Activated naive CD4-positive, alpha-beta T cell treated with anti-CD3 and anti-CD28 coated beads, Interleukin-2, amount 10 ng/mL, durations not matched to agents 7 days and 5 days (primary cell): ENCODE measurements at regions of chr12 and their contacts with region 1.

Region 1: DNA sequence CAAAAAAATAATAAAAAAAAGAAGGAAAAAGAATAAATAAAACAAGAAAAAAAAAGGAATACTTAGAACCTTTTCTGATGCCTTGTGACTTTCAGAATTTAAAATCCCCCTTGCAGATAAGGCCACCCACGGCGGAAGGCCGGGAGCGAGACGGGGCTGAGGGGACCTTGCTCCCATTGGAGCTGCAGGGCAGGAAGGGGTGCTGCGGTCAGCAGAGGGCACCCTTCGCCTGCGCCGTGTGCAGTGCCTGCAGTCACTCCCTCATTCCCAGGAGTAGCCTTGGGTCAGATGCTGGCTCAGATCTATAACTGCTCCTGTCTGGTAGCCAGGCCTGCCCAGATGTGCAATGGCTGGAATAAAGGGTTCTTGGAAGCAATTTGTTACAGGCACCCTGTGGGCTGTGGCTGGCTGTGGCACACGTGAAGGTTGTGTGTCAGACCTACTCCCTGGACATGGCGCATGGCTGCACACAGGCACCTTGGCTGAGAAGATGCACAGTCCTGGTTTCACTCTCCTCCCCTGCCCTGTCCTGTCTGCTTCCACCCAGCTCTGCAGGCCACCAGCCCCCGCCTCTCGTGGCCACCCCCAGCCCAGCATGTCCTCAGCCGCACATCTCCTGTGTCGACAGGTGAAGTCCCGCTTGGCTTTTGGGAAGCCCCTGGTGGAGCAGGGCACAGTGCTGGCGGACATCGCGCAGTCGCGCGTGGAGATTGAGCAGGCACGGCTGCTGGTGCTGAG is 13.4 kb upstream of the ALDH2 start:
- DNase-seq: no peak
- H3K4me3 Mint-ChIP-seq: no peak overlapping the region
- H3K27ac Mint-ChIP-seq: no peak overlapping the region
- H3K4me1 Mint-ChIP-seq: peaks cover 12% of the 10 kb centered on the region
- H3K27me3 Mint-ChIP-seq: no peaks in the 10 kb centered on the region

Region 2: DNA sequence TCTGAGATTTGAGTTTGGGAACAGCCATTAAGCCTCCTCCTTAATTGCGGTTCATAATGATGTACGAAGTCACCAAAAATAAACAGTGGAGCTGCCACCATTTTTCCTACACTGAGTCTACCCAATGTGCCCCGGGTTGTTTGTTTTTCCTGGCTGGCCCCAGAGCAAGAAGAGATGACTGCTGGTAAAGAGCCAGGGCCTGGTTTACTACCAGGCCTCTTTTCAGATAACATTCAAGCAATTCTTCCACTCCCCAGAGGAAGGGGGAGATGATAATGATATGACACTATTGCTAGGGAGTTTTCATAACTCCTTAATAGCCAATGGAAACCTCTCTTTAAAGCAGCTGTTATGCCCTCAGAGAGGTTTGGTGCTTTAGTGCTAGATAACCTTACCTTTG is 109.9 kb before region 1 on chr12:
- CTCF ChIA-PET with region 1: no interaction called
- DNase-seq: no peak
- H3K4me3 Mint-ChIP-seq: no peak overlapping the region
- H3K27ac Mint-ChIP-seq: no peak overlapping the region
- H3K4me1 Mint-ChIP-seq: peaks cover 2% of the 10 kb centered on the region
- H3K27me3 Mint-ChIP-seq: no peaks in the 10 kb centered on the region

Region 3: DNA sequence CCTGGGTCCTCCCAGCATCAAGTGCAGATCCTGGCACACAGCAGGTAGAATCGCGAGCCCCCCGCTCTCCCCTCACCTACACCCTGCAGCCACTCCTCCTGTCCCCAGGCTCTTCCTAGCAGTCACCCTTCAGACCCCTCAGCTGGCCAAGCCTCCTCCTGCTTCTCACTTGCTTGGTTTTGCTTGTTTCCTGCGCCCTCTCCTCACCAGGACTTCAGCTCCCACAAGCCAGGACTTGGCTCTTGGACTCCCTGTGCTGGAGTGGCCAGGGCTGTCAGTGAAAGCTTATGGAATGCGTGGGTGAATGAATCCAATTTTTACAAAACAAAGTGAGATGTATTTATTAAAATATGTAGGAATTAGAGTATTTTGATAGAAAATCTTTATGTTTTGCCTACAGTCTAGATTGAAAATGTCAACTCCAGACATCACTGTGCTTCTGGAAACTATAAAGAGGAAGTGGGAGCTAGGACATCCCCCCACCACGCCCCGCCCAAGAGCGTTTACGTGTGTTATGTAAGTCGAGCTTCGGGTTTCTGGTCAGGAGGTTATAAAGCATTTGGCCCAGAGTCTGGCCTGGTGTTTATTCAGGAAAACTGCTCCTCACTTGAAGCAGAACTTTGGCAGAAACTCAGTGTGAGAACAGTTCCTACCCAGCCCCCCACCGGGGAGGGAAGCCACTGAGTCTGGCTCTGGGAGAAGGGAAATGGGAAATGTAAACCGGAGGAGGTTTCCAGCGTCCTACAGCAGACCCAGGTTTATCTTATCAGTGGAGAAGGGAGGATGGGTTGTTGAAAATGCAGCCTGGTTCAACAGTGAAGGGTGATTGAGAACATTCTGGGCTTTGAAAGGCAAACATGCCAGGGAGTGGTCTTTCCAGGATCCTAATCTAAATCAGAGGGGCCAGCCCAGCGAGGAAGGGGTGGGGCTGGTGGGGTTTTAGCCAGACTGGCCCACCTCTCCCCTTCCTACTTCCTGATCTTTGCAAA is 22.2 kb after region 1 on chr12:
- CTCF ChIA-PET with region 1: no interaction called
- DNase-seq: no peak
- H3K4me3 Mint-ChIP-seq: no peak overlapping the region
- H3K27ac Mint-ChIP-seq: no peak overlapping the region
- H3K4me1 Mint-ChIP-seq: peaks cover 7% of the 10 kb centered on the region
- H3K27me3 Mint-ChIP-seq: peaks cover 29% of the 10 kb centered on the region

Region 4: DNA sequence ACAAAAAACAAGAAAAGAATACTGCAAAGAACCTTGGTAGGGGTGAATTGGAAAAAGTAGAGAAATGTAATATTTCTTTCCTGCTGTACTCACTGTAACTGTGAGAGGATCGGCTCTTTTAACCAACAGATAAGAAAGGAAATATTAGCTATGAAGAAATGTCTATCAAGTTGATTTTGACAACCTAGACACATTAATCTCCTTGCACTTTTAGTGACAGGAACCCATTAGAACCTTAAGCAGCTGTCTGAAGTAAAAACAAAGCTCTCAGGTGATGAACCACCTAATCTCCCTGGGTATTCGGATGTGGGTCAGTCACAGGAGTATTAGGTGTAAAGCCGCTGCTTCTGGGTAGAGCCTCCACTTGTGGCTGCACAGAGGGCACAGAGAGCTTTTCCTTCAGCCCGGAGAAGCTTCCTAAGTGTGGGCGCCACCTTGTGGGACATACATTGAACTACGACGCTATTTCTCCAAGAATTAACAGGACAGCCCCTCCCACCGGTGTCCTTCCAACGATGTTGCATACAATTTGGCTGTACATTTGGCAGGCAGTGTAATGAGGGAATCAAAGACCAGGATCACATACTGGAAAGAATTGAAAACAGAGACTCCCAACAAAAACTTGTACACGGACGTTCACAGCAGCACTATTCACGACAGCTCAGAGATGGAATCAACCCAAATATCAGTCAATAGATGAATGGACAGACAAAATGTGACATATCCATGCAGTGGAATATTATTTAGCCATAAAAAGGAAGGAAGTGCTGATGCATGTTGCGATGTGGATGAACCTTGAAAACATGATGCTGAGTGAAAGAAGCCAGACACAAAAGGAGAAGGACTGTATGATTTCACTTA is 59.8 kb after region 1 on chr12:
- CTCF ChIA-PET with region 1: interaction called, 33 read pairs
- DNase-seq: peak; percentile 78
- H3K4me3 Mint-ChIP-seq: no peak overlapping the region
- H3K27ac Mint-ChIP-seq: no peak overlapping the region
- H3K4me1 Mint-ChIP-seq: peaks cover 9% of the 10 kb centered on the region
- H3K27me3 Mint-ChIP-seq: peaks cover 10% of the 10 kb centered on the region

Region 5: DNA sequence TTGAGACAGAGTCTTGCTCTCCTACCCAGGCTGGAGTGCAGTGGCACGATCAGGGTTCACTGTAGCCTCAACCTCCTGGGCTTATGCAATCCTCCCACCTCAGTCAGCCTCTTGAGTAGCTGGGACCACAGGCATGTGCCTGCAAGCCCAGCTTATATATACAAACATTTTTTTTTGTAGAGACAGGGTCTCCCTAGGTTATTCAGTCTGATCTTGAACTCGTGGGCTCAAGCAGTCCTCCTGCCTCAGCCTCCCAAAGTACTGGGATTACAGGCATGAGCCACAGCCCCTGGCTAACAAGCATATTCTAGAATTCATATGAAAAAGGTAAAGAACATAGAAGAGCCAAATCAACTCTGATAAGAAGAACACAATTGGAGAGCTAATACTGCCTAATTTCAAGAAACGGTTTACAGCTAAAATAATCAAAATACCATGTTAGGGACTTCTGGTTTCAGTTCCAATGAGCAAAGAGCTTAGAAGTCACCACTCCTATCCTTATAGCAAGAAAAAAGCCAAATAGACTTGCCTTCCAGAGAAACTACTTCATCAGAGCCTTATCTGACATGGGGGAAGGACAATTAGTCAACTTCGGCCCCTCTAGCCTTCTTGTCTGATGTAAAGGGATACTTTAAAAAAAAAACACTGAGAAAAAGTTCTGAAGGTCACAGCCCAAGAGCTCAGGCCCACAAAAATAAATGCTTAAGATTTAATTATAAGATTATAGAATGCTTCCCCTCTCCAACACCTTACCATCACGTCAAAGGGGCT is 222.0 kb after region 1 on chr12:
- CTCF ChIA-PET with region 1: no interaction called
- DNase-seq: no peak
- H3K4me3 Mint-ChIP-seq: no peak overlapping the region
- H3K27ac Mint-ChIP-seq: no peak overlapping the region
- H3K4me1 Mint-ChIP-seq: peaks cover 14% of the 10 kb centered on the region
- H3K27me3 Mint-ChIP-seq: no peaks in the 10 kb centered on the region

Region 6: GRCh38 chr12:112087055-112087850 is 333.9 kb after region 1 on chr12:
- CTCF ChIA-PET with region 1: no interaction called
- DNase-seq: no peak
- H3K4me3 Mint-ChIP-seq: no peak overlapping the region
- H3K27ac Mint-ChIP-seq: no peak overlapping the region
- H3K4me1 Mint-ChIP-seq: peaks cover 16% of the 10 kb centered on the region
- H3K27me3 Mint-ChIP-seq: no peaks in the 10 kb centered on the region